IMR-90 (cell line): ENCODE measurements at regions of chr1 and their contacts with region 1.

Region 1: GRCh38 chr1:9629445-9630201 is 21.9 kb upstream of the PIK3CD start:
- DNase-seq: no peak
- ATAC-seq: no peak
- H3K4me3 ChIP-seq: no peak overlapping the region
- H3K27ac ChIP-seq: no peak overlapping the region
- H3K4me1 ChIP-seq: no peaks in the 10 kb centered on the region
- H3K27me3 ChIP-seq: peaks cover 8% of the 10 kb centered on the region
- CTCF ChIP-seq: no peak
- POLR2A ChIP-seq: no peak
- RAD21 ChIP-seq: no peak

Region 2: GRCh38 chr1:9689971-9690381 is 60.4 kb after region 1 on chr1:
- CTCF ChIA-PET with region 1: interaction called, 3 read pairs
- POLR2A ChIA-PET with region 1: no interaction called
- dilution Hi-C with region 1: no loop called
- in situ Hi-C with region 1: no loop called
- intact Hi-C with region 1: loop called (anchors 1 kb)
- DNase-seq: no peak
- ATAC-seq: peak; percentile 22
- H3K4me3 ChIP-seq: peak overlapping the region; percentile 50
- H3K27ac ChIP-seq: peak overlapping the region; percentile 24; the same call in 1 of the 2 replicates
- H3K4me1 ChIP-seq: peaks cover 18% of the 10 kb centered on the region
- H3K27me3 ChIP-seq: no peaks in the 10 kb centered on the region
- CTCF ChIP-seq: peak; percentile 23
- POLR2A ChIP-seq: no peak; the same call in 1 of the 2 replicates
- RAD21 ChIP-seq: no peak

Region 3: GRCh38 chr1:9867408-9868243 is 238.0 kb after region 1 on chr1:
- CTCF ChIA-PET with region 1: interaction called, 3 read pairs
- POLR2A ChIA-PET with region 1: no interaction called
- dilution Hi-C with region 1: no loop called
- in situ Hi-C with region 1: loop called (anchors 5 kb)
- intact Hi-C with region 1: loop called (anchors 1 kb)
- DNase-seq: peak; percentile 57
- ATAC-seq: peak; percentile 98
- H3K4me3 ChIP-seq: no peak overlapping the region
- H3K27ac ChIP-seq: no peak overlapping the region
- H3K4me1 ChIP-seq: peaks cover 2% of the 10 kb centered on the region
- H3K27me3 ChIP-seq: no peaks in the 10 kb centered on the region
- CTCF ChIP-seq: peak; percentile 97
- POLR2A ChIP-seq: peak; percentile 61
- RAD21 ChIP-seq: peak; percentile 99